T-cell (primary cell): ENCODE measurements at regions of chr22 and their contacts with region 1.

Region 1: DNA sequence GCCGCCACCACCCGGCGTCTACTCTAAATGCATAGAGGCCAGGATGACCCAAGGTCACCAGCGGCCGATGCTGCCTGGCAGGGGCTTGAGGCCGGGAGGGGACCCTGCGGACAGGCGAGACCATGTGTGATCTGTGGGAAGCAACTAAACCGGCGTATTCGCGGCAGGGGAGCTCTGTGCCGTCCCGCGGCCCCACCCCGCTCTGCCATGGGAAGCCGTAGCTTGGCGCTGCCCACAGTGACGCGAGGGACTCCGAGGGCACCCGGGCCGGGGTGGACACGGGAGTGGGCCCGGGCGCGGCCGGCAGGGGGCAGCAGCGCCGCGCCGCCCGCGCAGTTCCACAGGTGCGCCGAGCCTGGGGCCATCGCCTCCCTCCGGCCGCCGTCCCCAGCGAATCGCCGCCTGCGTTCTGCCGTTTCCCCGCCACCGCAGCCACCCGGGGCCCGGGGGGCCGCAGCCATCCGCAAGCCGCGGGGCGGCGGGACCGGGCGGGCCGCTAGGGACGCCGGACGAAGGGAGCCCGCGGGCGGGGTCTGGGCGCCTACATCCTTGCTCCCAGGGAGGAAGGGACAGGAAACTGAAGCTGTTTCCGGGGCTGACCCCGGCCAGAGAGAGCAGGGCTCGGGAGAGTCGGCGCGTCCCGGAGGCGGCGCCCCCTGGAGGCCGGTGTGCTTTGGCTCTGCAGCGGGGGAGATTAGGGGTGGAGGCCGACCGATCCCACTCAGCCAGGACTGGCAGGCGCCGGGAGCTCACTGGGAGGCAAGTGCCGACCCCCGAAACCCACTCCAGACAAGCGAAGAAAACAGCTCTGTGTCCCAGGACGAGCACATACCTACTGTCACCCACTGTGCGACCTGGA is 12.5 kb upstream of the HDHD5 start:
- DNase-seq: peak; percentile 45 to 81 (median 62)
- ATAC-seq: peak; percentile 90 to 95 (median 92)
- H3K4me3 ChIP-seq: peak overlapping the region; percentile 69 to 88
- H3K4me3 Mint-ChIP-seq: peak overlapping the region; percentile 78 to 87 (median 83)
- H3K27ac ChIP-seq: peak overlapping the region; percentile 57
- H3K27ac Mint-ChIP-seq: peak overlapping the region; percentile 69 to 82
- H3K4me1 ChIP-seq: peaks cover 2 to 12% of the 10 kb centered on the region in 2 experiments
- H3K4me1 Mint-ChIP-seq: peaks cover 5 to 8% (median 7%) of the 10 kb centered on the region in 3 donors
- H3K27me3 ChIP-seq: peaks cover 0 to 9% of the 10 kb centered on the region in 2 experiments
- H3K27me3 Mint-ChIP-seq: no peaks in the 10 kb centered on the region

Region 2: DNA sequence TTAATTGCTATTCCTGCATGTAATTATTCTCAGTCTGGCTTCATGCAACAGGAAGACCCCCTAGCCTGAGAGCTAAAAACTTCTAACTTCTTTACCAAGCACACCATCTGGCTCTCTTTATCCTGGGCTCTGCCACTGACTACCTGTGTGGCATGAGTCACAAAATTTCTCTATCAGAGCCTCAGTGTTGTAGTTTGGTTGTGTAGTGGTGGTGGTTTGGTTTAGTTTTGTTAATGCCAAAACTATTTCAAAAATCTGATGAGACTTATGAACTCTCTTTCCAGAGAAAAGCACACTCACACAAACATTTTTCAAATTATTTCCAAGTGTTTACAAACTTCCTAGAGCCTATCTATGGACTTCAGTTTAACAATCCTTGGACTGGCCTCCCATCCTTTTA is 94.3 kb before region 1 on chr22:
- CTCF ChIA-PET with region 1: interaction called, 9 to 26 read pairs
- POLR2A ChIA-PET with region 1: no interaction called
- DNase-seq: no peak
- ATAC-seq: no peak
- H3K4me3 ChIP-seq: no peak overlapping the region
- H3K4me3 Mint-ChIP-seq: no peak overlapping the region
- H3K27ac ChIP-seq: no peak overlapping the region
- H3K27ac Mint-ChIP-seq: no peak overlapping the region
- H3K4me1 ChIP-seq: peaks cover 4 to 9% of the 10 kb centered on the region in 2 experiments
- H3K4me1 Mint-ChIP-seq: peaks cover 0 to 16% (median 16%) of the 10 kb centered on the region in 3 donors
- H3K27me3 ChIP-seq: peaks cover 0 to 4% of the 10 kb centered on the region in 2 experiments
- H3K27me3 Mint-ChIP-seq: no peaks in the 10 kb centered on the region

Region 3: DNA sequence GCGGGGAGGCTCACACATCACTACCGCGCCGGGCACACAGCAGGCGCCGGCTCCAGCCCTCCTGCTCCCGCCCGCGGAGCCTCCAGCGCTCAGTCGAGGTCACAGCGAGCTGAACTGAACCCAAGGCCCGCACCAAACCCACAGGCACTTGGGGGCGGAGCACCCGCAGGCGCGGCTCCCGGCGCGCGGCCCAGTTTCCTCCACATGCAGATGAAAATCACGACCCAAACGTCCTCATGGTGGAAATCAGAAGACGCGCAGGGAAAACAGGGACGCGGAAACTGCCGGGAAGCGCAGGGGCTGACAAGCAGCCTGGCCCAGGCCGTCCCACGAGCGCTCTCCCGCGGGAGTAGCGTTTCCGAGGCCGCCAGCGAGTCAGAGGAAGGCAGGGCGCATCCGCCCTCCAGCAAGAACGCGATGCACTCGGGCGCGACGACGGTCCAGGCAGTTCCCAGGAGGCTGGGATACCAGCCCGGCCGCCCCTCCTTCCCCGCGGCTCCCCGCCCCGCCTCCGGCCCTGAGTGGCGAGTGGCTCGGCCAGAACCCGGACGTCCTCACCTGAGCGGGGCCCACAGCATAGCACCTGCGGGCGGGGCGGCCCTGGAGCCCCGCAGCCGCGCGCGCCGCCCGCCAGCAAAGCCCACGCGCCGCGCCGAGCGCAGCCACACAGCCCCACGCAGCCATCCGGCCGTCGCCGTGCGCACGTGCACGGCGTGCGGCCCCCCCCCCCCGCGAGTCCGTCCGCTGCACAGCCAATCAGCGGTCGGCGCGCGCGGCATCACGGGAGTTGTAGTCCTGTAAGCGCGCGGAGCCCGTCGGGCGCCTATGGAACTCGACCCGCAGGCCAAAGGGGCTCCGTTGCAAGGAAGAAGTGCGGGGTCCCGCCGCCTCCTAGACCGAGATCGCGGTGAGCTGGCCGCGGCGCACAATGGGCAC is 12.7 kb before region 1 on chr22 and contains the start of gene HDHD5:
- CTCF ChIA-PET with region 1: interaction called, 5 to 10 read pairs
- POLR2A ChIA-PET with region 1: interaction called in 1 of 2 experiments, 6 read pairs
- DNase-seq: peak; percentile 76 to 95 (median 84)
- ATAC-seq: peak; percentile 92 to 96 (median 94)
- H3K4me3 ChIP-seq: peak within 1 kb of the TSS; percentile 72 to 84
- H3K4me3 Mint-ChIP-seq: peak within 1 kb of the TSS; percentile 80 to 83 (median 82)
- H3K27ac ChIP-seq: peak within 1 kb of the TSS; percentile 49
- H3K27ac Mint-ChIP-seq: peak within 1 kb of the TSS; percentile 59 to 66
- H3K4me1 ChIP-seq: peaks cover 16 to 44% of the 10 kb centered on the region in 2 experiments
- H3K4me1 Mint-ChIP-seq: peaks cover 34 to 40% (median 35%) of the 10 kb centered on the region in 3 donors
- H3K27me3 ChIP-seq: peaks cover 0 to 2% of the 10 kb centered on the region in 2 experiments
- H3K27me3 Mint-ChIP-seq: no peaks in the 10 kb centered on the region
- total RNA-seq, gene HDHD5: 17.6 to 34.2 (median 30.1) TPM

Region 4: GRCh38 chr22:17201285-17201945 is 29.9 kb after region 1 on chr22:
- CTCF ChIA-PET with region 1: interaction called, 3 to 10 read pairs
- POLR2A ChIA-PET with region 1: no interaction called
- DNase-seq: no peak
- ATAC-seq: no peak
- H3K4me3 ChIP-seq: no peak overlapping the region
- H3K4me3 Mint-ChIP-seq: no peak overlapping the region
- H3K27ac ChIP-seq: no peak overlapping the region
- H3K27ac Mint-ChIP-seq: peak overlapping the region; percentile 16 to 32
- H3K4me1 ChIP-seq: no peaks in the 10 kb centered on the region
- H3K4me1 Mint-ChIP-seq: peaks cover 7 to 12% (median 10%) of the 10 kb centered on the region in 3 donors
- H3K27me3 ChIP-seq: no peaks in the 10 kb centered on the region
- H3K27me3 Mint-ChIP-seq: no peaks in the 10 kb centered on the region

Region 5: GRCh38 chr22:17266251-17266971 is 94.9 kb after region 1 on chr22:
- CTCF ChIA-PET with region 1: no interaction called
- POLR2A ChIA-PET with region 1: no interaction called
- DNase-seq: peak in 19 of 35 experiments; percentile 6 to 43 (median 18)
- ATAC-seq: peak; percentile 75 to 86 (median 82)
- H3K4me3 ChIP-seq: no peak overlapping the region
- H3K4me3 Mint-ChIP-seq: peak overlapping the region in 2 of 3 donors; percentile 6 to 58
- H3K27ac ChIP-seq: no peak overlapping the region
- H3K27ac Mint-ChIP-seq: peak overlapping the region; percentile 75 to 80
- H3K4me1 ChIP-seq: peaks cover 4 to 23% of the 10 kb centered on the region in 2 experiments
- H3K4me1 Mint-ChIP-seq: peaks cover 13 to 29% (median 21%) of the 10 kb centered on the region in 3 donors
- H3K27me3 ChIP-seq: no peaks in the 10 kb centered on the region
- H3K27me3 Mint-ChIP-seq: no peaks in the 10 kb centered on the region

Region 6: GRCh38 chr22:17492247-17492646 is 320.7 kb after region 1 on chr22:
- CTCF ChIA-PET with region 1: interaction called, 4 to 16 read pairs
- POLR2A ChIA-PET with region 1: no interaction called
- DNase-seq: no peak
- ATAC-seq: no peak
- H3K4me3 ChIP-seq: no peak overlapping the region
- H3K4me3 Mint-ChIP-seq: no peak overlapping the region
- H3K27ac ChIP-seq: no peak overlapping the region
- H3K27ac Mint-ChIP-seq: no peak overlapping the region
- H3K4me1 ChIP-seq: no peaks in the 10 kb centered on the region
- H3K4me1 Mint-ChIP-seq: no peaks in the 10 kb centered on the region
- H3K27me3 ChIP-seq: no peaks in the 10 kb centered on the region
- H3K27me3 Mint-ChIP-seq: no peaks in the 10 kb centered on the region

Region 7: DNA sequence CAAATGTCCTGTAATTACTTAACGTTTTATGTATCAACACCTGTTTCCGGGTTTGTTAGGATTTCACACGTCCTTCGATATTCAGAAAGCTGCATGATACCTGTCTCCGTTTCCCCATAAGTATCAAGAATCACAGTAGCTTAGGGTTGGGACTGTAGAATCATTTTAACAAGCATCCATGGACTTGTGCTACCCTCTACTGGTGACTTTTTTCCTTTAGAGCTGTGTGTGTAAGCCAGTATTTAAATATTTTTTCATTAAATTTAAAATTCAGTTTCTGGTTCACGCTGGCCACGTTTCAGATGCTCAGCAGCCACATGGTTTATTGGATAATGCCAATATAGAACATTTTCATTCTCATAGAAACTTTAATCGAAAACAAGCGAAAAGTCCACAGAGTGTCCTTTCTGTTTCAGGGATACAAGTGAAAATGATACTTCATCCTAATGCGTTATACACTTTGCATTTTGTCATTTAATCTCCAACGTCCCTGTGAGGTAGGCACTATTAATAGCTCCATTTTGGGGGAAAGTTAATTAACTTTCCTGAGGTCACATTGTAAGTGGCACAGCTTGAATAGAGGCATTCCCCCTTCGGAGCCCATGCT is 330.2 kb after region 1 on chr22:
- CTCF ChIA-PET with region 1: interaction called, 31 to 54 read pairs
- POLR2A ChIA-PET with region 1: interaction called in 1 of 2 experiments, 10 read pairs
- DNase-seq: peak in 19 of 35 experiments; percentile 2 to 80 (median 17)
- ATAC-seq: peak; percentile 63 to 81 (median 70)
- H3K4me3 ChIP-seq: no peak overlapping the region
- H3K4me3 Mint-ChIP-seq: no peak overlapping the region
- H3K27ac ChIP-seq: no peak overlapping the region
- H3K27ac Mint-ChIP-seq: no peak overlapping the region
- H3K4me1 ChIP-seq: no peaks in the 10 kb centered on the region
- H3K4me1 Mint-ChIP-seq: no peaks in the 10 kb centered on the region
- H3K27me3 ChIP-seq: peaks cover 0 to 11% of the 10 kb centered on the region in 2 experiments
- H3K27me3 Mint-ChIP-seq: peaks cover 0 to 2% of the 10 kb centered on the region in 2 donors